GM12878 (cell line): ENCODE measurements at regions of chr6 and their contacts with region 1.

Region 1: GRCh38 chr6:68226460-68226859 is 408.6 kb upstream of the ADGRB3 start:
- DNase-seq: no peak
- ATAC-seq: peak; percentile 45; the same call in 1 of the 3 replicates
- H3K4me3 ChIP-seq: no peak overlapping the region
- H3K27ac ChIP-seq: no peak overlapping the region
- H3K4me1 ChIP-seq: no peaks in the 10 kb centered on the region
- H3K27me3 ChIP-seq: no peaks in the 10 kb centered on the region
- CTCF ChIP-seq: peak; percentile 28 to 57 (median 28); a peak in 5 of 6 replicates
- EP300 ChIP-seq: no peak
- POLR2A ChIP-seq: no peak
- RAD21 ChIP-seq: peak; percentile 75

Region 2: GRCh38 chr6:67068781-67069180 is 1157.7 kb before region 1 on chr6:
- CTCF ChIA-PET with region 1: no interaction called
- POLR2A ChIA-PET with region 1: no interaction called
- RAD21 ChIA-PET with region 1: interaction called, 6 read pairs
- SMC1A ChIA-PET with region 1: no interaction called
- in situ Hi-C with region 1: no loop called
- intact Hi-C with region 1: loop called (anchors 10 kb)
- DNase-seq: no peak
- ATAC-seq: no peak
- H3K4me3 ChIP-seq: no peak overlapping the region
- H3K27ac ChIP-seq: no peak overlapping the region
- H3K4me1 ChIP-seq: no peaks in the 10 kb centered on the region
- H3K27me3 ChIP-seq: no peaks in the 10 kb centered on the region
- CTCF ChIP-seq: no peak
- EP300 ChIP-seq: no peak
- POLR2A ChIP-seq: no peak
- RAD21 ChIP-seq: no peak

Region 3: DNA sequence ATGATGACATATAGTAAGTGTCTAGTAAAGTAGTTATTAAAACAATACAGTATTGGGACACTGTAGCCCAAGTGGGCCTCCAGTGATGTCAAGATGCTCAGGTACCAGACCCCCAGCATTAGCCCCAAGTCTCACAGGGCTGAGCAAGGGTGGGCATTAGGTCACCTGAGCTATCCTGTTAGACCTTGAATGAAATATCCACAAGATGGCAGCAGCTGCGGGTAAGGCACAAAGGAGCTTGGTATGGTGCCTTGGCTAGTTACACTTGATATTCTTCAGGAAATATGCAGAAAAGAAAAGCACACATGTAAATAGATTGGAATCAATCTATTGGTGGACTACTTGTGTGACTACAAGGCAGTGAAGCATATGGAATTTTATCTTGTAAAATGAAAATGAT is 293.2 kb before region 1 on chr6:
- CTCF ChIA-PET with region 1: interaction called, 52 read pairs
- POLR2A ChIA-PET with region 1: no interaction called
- RAD21 ChIA-PET with region 1: interaction called, 20 read pairs
- SMC1A ChIA-PET with region 1: interaction called, 45 read pairs
- in situ Hi-C with region 1: no loop called
- intact Hi-C with region 1: loop called (anchors 1 kb)
- DNase-seq: no peak
- ATAC-seq: peak; percentile 88
- H3K4me3 ChIP-seq: no peak overlapping the region
- H3K27ac ChIP-seq: no peak overlapping the region
- H3K4me1 ChIP-seq: no peaks in the 10 kb centered on the region
- H3K27me3 ChIP-seq: no peaks in the 10 kb centered on the region
- CTCF ChIP-seq: peak; percentile 21 to 41 (median 32); a peak in 4 of 6 replicates
- EP300 ChIP-seq: no peak
- POLR2A ChIP-seq: no peak
- RAD21 ChIP-seq: peak; percentile 68

Region 4: GRCh38 chr6:68186870-68187269 is 39.6 kb before region 1 on chr6:
- CTCF ChIA-PET with region 1: no interaction called
- POLR2A ChIA-PET with region 1: no interaction called
- RAD21 ChIA-PET with region 1: no interaction called
- SMC1A ChIA-PET with region 1: no interaction called
- in situ Hi-C with region 1: no loop called
- intact Hi-C with region 1: no loop called
- DNase-seq: no peak
- ATAC-seq: no peak
- H3K4me3 ChIP-seq: no peak overlapping the region
- H3K27ac ChIP-seq: no peak overlapping the region
- H3K4me1 ChIP-seq: no peaks in the 10 kb centered on the region
- H3K27me3 ChIP-seq: no peaks in the 10 kb centered on the region
- CTCF ChIP-seq: no peak
- EP300 ChIP-seq: no peak
- POLR2A ChIP-seq: no peak
- RAD21 ChIP-seq: no peak

Region 5: DNA sequence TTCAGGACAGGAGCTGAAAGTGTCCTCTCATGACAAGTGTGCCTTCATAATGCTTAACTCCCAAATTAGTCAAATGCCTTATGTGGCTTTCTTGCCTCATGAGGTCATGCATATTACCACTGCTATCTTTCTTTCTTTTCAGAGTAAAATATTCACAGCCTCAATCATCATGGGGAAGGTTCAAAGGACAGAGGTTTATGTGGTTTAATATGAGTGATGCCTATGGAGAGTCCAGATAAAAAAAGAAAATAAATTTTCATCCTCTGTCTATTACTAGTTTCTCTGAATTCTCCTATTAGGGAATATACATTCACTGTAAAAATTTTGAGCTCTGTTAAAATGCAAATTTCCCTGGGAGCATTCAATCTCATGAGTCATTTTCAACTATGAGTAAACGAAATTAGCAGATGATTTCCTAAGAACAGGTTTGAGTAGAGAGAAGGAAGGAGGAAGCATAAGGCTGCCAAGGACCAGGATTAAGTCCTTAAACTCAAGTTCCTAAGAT is 11.7 kb after region 1 on chr6:
- CTCF ChIA-PET with region 1: interaction called, 25 read pairs
- POLR2A ChIA-PET with region 1: no interaction called
- RAD21 ChIA-PET with region 1: interaction called, 6 read pairs
- SMC1A ChIA-PET with region 1: interaction called, 11 read pairs
- in situ Hi-C with region 1: no loop called
- intact Hi-C with region 1: no loop called
- DNase-seq: no peak
- ATAC-seq: peak; percentile 80
- H3K4me3 ChIP-seq: no peak overlapping the region
- H3K27ac ChIP-seq: no peak overlapping the region
- H3K4me1 ChIP-seq: no peaks in the 10 kb centered on the region
- H3K27me3 ChIP-seq: no peaks in the 10 kb centered on the region
- CTCF ChIP-seq: no peak
- EP300 ChIP-seq: peak in 1 of 2 experiments; percentile 19; a peak in 1 of 4 replicates
- POLR2A ChIP-seq: no peak
- RAD21 ChIP-seq: no peak

Region 6: DNA sequence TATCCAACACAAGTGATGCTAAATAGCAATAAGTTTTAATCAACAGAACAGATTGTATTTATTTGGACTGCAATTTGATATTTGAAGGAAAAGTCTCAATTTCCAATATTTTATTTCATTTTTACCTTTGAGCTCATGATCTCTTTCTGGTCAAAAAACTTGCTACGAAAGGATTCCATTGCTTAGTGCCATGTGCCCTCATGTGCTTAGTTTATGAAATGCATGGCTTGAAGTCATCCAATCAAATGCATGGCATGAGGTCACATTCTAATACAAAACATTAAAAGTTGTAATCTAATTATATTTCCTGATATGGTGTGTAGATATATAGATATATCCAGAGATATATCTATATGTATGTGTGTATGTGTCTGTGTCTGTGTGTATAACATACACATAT is 87.5 kb after region 1 on chr6:
- CTCF ChIA-PET with region 1: interaction called, 11 read pairs
- POLR2A ChIA-PET with region 1: no interaction called
- RAD21 ChIA-PET with region 1: interaction called, 6 read pairs
- SMC1A ChIA-PET with region 1: interaction called, 4 read pairs
- in situ Hi-C with region 1: no loop called
- intact Hi-C with region 1: no loop called
- DNase-seq: no peak
- ATAC-seq: no peak
- H3K4me3 ChIP-seq: no peak overlapping the region
- H3K27ac ChIP-seq: no peak overlapping the region
- H3K4me1 ChIP-seq: no peaks in the 10 kb centered on the region
- H3K27me3 ChIP-seq: no peaks in the 10 kb centered on the region
- CTCF ChIP-seq: peak; percentile 5 to 37 (median 17); a peak in 2 of 6 replicates
- EP300 ChIP-seq: no peak
- POLR2A ChIP-seq: no peak
- RAD21 ChIP-seq: peak; percentile 73